ENCODE measurements at regions of chr10 and their contacts with region 1.

Region 1: GRCh38 chr10:4241724-4242345 is 456.8 kb upstream of the KLF6 start:
- DNase-seq: peak; percentile 89
- H3K4me3 ChIP-seq: peak overlapping the region in 1 of 3 experiments; percentile 63
- H3K27ac ChIP-seq: peak overlapping the region; percentile 99
- H3K4me1 ChIP-seq: peaks cover 50% of the 10 kb centered on the region
- H3K27me3 ChIP-seq: no peaks in the 10 kb centered on the region
- CTCF ChIP-seq: no peak
- POLR2A ChIP-seq: no peak

Region 2: GRCh38 chr10:3265088-3265487 is 976.7 kb before region 1 on chr10:
- CTCF ChIA-PET with region 1: no interaction called
- POLR2A ChIA-PET with region 1: no interaction called
- dilution Hi-C with region 1: no loop called
- intact Hi-C with region 1: loop called (anchors 5 kb)
- DNase-seq: peak; percentile 26
- H3K4me3 ChIP-seq: no peak overlapping the region
- H3K27ac ChIP-seq: peak overlapping the region; percentile 82
- H3K4me1 ChIP-seq: peaks cover 39% of the 10 kb centered on the region
- H3K27me3 ChIP-seq: no peaks in the 10 kb centered on the region
- CTCF ChIP-seq: no peak
- POLR2A ChIP-seq: no peak

Region 3: DNA sequence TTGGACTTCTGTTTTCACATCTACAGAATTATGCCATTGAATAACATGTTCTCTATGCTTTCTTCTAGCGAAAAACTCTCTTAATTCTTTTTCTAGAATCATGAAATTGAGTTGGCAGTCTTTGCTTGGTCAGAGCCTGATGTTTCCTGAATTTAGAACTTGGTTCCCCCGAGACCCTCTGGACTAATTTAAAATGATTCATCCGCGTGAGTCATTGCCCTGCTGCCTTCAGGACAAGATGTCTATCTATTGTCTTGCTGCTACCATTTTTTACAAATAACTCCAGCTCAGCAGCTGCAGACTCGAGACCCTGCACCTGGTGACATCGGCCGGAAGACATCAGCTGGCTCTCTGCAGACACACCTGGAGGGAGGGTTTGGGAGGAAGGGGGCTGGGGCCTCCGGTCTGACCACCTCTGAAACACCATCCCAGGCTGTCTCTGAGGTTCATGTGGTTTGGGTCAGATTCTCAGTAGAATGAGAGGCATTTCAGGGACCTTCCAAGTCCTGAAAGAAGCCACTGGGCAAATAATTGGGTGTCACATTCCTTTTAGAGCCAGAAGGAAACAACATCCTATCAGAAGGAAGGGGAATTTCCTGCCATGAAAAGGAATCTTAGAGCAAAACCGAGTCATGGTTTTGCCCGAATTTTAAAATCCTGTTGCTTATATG is 435.9 kb before region 1 on chr10:
- CTCF ChIA-PET with region 1: no interaction called
- POLR2A ChIA-PET with region 1: no interaction called
- dilution Hi-C with region 1: no loop called
- intact Hi-C with region 1: loop called (anchors 1 kb)
- DNase-seq: peak; percentile 96
- H3K4me3 ChIP-seq: peak overlapping the region in 1 of 3 experiments; percentile 31
- H3K27ac ChIP-seq: peak overlapping the region; percentile 100
- H3K4me1 ChIP-seq: peaks cover 70% of the 10 kb centered on the region
- H3K27me3 ChIP-seq: no peaks in the 10 kb centered on the region
- CTCF ChIP-seq: no peak
- POLR2A ChIP-seq: peak; percentile 29

Region 4: DNA sequence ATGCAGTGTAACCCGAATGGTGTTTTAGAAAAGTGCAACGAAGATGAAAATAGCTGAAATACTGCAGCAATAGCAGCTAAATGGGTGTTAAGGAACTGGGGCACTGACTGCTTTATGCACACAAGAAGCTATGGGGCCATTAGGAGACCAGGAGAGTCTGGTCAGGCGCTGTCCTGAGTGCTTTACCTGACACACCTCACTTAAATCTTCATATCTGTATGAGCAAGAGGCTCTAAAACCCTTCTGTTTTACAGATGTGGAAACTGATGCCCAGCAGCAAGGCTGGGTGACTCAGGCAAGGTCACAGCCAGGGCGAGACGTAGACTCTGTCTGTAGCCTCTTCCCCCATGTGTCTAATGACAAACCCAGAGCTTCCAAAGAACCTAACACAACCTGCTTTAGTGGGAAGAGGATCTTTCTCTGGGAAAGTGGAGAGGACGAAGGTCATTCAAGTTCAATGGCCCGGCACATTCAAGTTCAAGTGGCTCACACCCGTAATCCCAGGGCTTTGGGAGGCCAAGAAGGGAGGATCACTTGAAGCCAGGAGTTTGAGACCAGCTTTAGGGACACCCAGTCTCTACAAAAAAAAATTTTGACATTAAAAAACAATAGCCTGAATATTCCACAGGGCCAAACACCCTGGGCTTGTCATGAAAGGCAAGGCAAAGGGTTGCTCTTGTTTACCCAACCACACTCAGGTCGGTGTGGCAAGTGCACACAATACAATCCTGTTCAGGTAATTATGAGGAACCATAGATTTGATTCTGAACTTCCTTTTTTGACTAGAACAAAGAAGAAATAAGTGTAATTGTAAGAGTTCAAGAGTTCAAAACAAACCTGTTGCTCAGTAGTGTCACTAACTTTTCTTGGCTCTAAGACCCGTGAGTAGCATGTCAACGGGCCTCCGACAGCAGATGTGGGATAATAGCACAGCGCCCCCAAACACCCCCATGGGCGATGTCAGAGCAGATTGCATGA is 403.1 kb before region 1 on chr10:
- CTCF ChIA-PET with region 1: no interaction called
- POLR2A ChIA-PET with region 1: no interaction called
- dilution Hi-C with region 1: no loop called
- intact Hi-C with region 1: no loop called
- DNase-seq: no peak
- H3K4me3 ChIP-seq: no peak overlapping the region
- H3K27ac ChIP-seq: no peak overlapping the region
- H3K4me1 ChIP-seq: peaks cover 8% of the 10 kb centered on the region
- H3K27me3 ChIP-seq: no peaks in the 10 kb centered on the region
- CTCF ChIP-seq: no peak
- POLR2A ChIP-seq: no peak

Region 5: GRCh38 chr10:3924344-3924743 is 317.5 kb before region 1 on chr10:
- CTCF ChIA-PET with region 1: no interaction called
- POLR2A ChIA-PET with region 1: interaction called, 3 read pairs
- dilution Hi-C with region 1: no loop called
- intact Hi-C with region 1: loop called (anchors 1 kb)
- DNase-seq: peak; percentile 98
- H3K4me3 ChIP-seq: no peak overlapping the region
- H3K27ac ChIP-seq: peak overlapping the region; percentile 99
- H3K4me1 ChIP-seq: peaks cover 29% of the 10 kb centered on the region
- H3K27me3 ChIP-seq: no peaks in the 10 kb centered on the region
- CTCF ChIP-seq: no peak
- POLR2A ChIP-seq: peak; percentile 32

Region 6: DNA sequence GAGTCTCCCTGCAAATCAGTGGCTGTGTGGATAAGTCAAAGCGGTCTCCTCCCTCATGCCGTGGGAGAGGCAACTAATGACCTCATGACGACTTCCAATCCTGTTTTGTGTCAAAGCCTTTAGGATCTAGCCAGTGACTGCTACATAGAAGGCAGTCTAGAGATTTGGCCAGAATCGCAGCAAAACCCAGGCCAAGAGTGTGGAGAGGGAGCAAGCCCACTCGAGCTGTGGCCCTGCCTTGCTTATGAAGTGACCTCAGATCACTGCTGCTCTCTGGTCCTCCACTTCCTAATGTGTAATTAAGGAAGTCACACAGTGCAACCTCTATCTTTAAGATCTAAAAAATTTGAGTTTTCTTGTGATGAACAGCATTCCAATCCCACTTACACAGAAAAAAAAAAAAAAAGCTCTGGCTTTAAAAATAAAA is 160.1 kb before region 1 on chr10:
- CTCF ChIA-PET with region 1: no interaction called
- POLR2A ChIA-PET with region 1: no interaction called
- dilution Hi-C with region 1: no loop called
- intact Hi-C with region 1: loop called (anchors 2 kb)
- DNase-seq: no peak
- H3K4me3 ChIP-seq: no peak overlapping the region
- H3K27ac ChIP-seq: peak overlapping the region; percentile 35
- H3K4me1 ChIP-seq: peaks cover 20% of the 10 kb centered on the region
- H3K27me3 ChIP-seq: no peaks in the 10 kb centered on the region
- CTCF ChIP-seq: no peak
- POLR2A ChIP-seq: no peak

Region 7: GRCh38 chr10:4450956-4451908 is 209.4 kb after region 1 on chr10:
- CTCF ChIA-PET with region 1: no interaction called
- POLR2A ChIA-PET with region 1: no interaction called
- dilution Hi-C with region 1: no loop called
- intact Hi-C with region 1: loop called (anchors 2 kb)
- DNase-seq: peak; percentile 96
- H3K4me3 ChIP-seq: no peak overlapping the region
- H3K27ac ChIP-seq: peak overlapping the region; percentile 85
- H3K4me1 ChIP-seq: peaks cover 23% of the 10 kb centered on the region
- H3K27me3 ChIP-seq: no peaks in the 10 kb centered on the region
- CTCF ChIP-seq: no peak
- POLR2A ChIP-seq: no peak

Region 8: DNA sequence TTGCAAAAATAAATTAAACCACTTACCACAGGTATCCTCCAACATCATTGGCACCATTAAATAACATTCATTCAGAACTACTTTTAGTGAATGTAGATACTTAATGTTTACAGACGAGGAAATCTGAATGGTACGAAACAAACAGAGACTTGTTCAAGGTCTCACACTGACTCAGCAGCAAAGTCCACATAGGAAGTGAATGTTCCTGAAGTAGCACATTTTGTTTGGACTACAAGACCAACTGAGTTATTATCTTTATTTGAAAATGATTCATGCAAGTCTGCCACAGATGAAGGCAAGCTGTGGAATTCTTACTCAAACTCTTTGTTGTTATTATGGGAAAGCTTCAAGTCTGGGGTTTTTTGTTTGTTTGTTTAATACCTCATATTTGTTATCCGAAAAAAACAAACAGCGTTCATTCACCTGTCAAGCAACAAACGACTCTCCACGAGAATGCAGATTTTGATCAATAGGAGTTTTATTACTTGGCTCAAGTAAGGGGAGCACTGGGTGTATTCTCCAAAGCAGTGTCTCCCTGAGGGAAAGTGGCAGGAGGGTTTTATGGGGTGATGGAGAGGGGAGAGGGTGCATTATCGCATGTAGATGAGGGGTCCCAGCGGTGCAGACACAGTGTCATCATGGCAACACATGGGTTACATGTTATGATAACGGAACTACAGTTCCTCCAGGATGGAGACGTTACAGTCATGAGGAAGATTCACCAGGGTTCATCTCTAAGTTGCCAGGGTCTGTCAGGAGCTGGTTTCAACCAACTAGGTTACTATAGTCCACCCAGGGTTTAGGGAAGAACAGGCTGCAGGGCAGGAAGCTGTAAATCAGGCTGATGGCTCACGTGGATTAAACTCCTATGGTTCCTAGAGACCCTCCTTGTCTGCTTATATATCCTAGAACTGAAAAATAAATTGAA is 436.5 kb after region 1 on chr10:
- CTCF ChIA-PET with region 1: no interaction called
- POLR2A ChIA-PET with region 1: no interaction called
- dilution Hi-C with region 1: no loop called
- intact Hi-C with region 1: loop called (anchors 1 kb)
- DNase-seq: peak; percentile 94
- H3K4me3 ChIP-seq: peak overlapping the region; percentile 32 to 99 (median 71)
- H3K27ac ChIP-seq: peak overlapping the region; percentile 84
- H3K4me1 ChIP-seq: peaks cover 31% of the 10 kb centered on the region
- H3K27me3 ChIP-seq: no peaks in the 10 kb centered on the region
- CTCF ChIP-seq: no peak
- POLR2A ChIP-seq: no peak